ENCODE measurements at regions of chrX and their contacts with region 1.

Region 1: GRCh38 chrX:13646154-13646549 is 6.8 kb upstream of the TCEANC start:
- DNase-seq: peak; percentile 65
- ATAC-seq: no peak
- H3K4me3 Mint-ChIP-seq: no peak overlapping the region
- H3K27ac Mint-ChIP-seq: peak overlapping the region; percentile 32
- H3K4me1 Mint-ChIP-seq: peaks cover 17% of the 10 kb centered on the region
- H3K27me3 Mint-ChIP-seq: no peaks in the 10 kb centered on the region

Region 2: DNA sequence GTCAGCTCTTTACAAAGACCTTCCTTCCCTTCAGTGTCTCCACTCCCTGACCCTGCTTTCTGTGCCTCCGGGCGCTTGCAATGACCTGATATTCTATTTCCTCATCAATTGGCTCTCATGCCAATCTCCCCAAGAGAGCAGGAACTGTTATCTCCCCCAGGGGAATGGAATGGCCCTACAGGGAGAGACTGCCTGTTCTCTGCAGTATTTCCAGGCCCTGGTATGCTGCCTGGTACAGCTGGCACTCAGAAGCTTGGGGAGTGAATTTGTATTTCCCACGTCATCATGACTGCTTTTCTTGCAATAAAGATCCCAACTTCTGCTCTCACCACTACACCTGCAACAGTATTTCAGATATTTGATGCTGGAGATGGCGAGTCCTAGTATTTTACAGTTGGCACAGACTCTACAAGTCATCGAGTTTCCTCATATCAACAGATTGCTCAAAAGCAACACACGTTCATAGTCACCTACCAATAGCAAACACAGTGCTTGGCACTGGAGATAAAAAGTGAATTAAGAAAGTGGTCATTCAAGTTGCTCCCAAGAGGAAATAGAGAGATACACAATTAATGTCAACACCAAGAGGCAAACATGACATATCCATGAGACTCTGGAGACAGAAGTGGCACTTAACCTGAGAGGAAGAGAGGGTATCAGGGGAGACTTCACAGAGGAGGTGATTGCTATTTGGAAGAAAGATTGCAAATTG is 167.3 kb before region 1 on chrX:
- CTCF ChIA-PET with region 1: no interaction called
- DNase-seq: no peak
- ATAC-seq: no peak
- H3K4me3 Mint-ChIP-seq: no peak overlapping the region
- H3K27ac Mint-ChIP-seq: no peak overlapping the region
- H3K4me1 Mint-ChIP-seq: peaks cover 11% of the 10 kb centered on the region
- H3K27me3 Mint-ChIP-seq: no peaks in the 10 kb centered on the region

Region 3: GRCh38 chrX:13506574-13506973 is 139.6 kb before region 1 on chrX:
- CTCF ChIA-PET with region 1: interaction called, 45 read pairs
- DNase-seq: peak; percentile 52
- ATAC-seq: no peak
- H3K4me3 Mint-ChIP-seq: no peak overlapping the region
- H3K27ac Mint-ChIP-seq: no peak overlapping the region
- H3K4me1 Mint-ChIP-seq: peaks cover 14% of the 10 kb centered on the region
- H3K27me3 Mint-ChIP-seq: no peaks in the 10 kb centered on the region

Region 4: GRCh38 chrX:13511944-13512330 is 134.2 kb before region 1 on chrX:
- CTCF ChIA-PET with region 1: interaction called, 45 read pairs
- DNase-seq: no peak
- ATAC-seq: no peak
- H3K4me3 Mint-ChIP-seq: no peak overlapping the region
- H3K27ac Mint-ChIP-seq: no peak overlapping the region
- H3K4me1 Mint-ChIP-seq: peaks cover 3% of the 10 kb centered on the region
- H3K27me3 Mint-ChIP-seq: no peaks in the 10 kb centered on the region